IMR-90 (cell line): ENCODE measurements at regions of chr2 and their contacts with region 1.

Region 1: DNA sequence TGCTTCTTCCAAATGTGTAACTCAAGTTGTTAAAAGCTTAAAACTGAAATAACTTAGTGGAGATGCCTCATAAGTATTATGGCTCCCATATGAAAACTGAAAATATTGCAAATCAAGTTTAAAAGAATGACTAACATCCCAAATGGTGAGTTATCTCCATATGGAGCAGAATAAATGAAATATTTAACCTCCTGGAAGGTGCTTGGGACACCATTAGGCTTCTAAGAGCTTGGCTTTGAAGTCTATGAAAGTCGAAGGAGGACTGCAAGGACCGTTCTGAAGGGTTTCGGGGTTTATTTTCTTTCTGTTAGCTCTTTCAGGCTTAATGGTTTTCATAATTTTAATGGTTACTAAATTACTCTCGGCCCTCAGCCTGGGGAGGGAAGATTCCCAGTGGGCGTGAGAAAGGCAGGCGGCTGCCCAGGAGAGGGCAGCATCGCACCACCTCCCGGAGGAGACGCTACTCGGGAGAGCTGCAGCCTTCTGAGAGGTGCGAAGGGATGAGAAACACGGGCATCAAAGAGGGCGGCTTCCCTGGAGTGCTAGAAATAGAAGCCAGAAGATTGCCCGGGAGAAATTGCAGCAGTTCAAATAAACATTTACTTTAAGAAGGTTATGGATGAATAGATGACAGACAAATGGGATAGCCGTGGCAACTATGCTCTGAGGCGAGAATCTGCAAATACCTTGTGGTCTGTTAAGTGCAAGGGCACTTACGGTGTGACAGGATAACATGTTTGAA is 43.1 kb downstream of the MAP3K19 start:
- DNase-seq: peak; percentile 62
- ATAC-seq: peak; percentile 100
- H3K4me3 ChIP-seq: no peak overlapping the region
- H3K27ac ChIP-seq: no peak overlapping the region
- H3K4me1 ChIP-seq: no peaks in the 10 kb centered on the region
- H3K27me3 ChIP-seq: peaks cover 17% of the 10 kb centered on the region
- CTCF ChIP-seq: peak; percentile 96
- POLR2A ChIP-seq: no peak
- RAD21 ChIP-seq: peak; percentile 99

Region 2: GRCh38 chr2:135226961-135227360 is 222.8 kb after region 1 on chr2:
- CTCF ChIA-PET with region 1: no interaction called
- POLR2A ChIA-PET with region 1: no interaction called
- dilution Hi-C with region 1: no loop called
- in situ Hi-C with region 1: no loop called
- intact Hi-C with region 1: no loop called
- DNase-seq: peak; percentile 60
- ATAC-seq: peak; percentile 82
- H3K4me3 ChIP-seq: no peak overlapping the region
- H3K27ac ChIP-seq: no peak overlapping the region
- H3K4me1 ChIP-seq: no peaks in the 10 kb centered on the region; the same call in 1 of the 2 replicates
- H3K27me3 ChIP-seq: no peaks in the 10 kb centered on the region
- CTCF ChIP-seq: no peak
- POLR2A ChIP-seq: no peak
- RAD21 ChIP-seq: no peak

Region 3: DNA sequence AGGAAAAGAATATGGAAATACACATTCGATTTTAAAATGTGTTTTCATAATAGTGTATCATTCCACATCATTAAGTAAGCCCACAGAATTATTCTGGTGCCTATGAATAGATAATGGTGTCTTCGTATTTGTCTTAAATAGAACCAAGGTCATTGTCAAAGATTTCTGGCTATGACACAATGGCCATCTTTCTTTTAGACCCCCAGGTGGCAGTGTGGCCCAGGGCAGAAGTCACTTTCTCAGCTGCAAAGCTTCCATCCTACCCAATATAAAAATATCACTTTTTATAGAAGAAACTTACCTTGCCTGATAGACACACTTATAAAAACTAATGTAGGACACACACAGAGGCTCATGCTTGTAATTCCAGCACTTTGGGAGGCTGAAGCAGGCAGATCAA is 469.4 kb after region 1 on chr2:
- CTCF ChIA-PET with region 1: interaction called, 3 read pairs
- POLR2A ChIA-PET with region 1: no interaction called
- dilution Hi-C with region 1: no loop called
- in situ Hi-C with region 1: no loop called
- intact Hi-C with region 1: loop called (anchors 5 kb)
- DNase-seq: peak; percentile 8
- ATAC-seq: no peak
- H3K4me3 ChIP-seq: no peak overlapping the region
- H3K27ac ChIP-seq: no peak overlapping the region
- H3K4me1 ChIP-seq: no peaks in the 10 kb centered on the region
- H3K27me3 ChIP-seq: no peaks in the 10 kb centered on the region
- CTCF ChIP-seq: peak; percentile 49
- POLR2A ChIP-seq: no peak
- RAD21 ChIP-seq: peak; percentile 66

Region 4: DNA sequence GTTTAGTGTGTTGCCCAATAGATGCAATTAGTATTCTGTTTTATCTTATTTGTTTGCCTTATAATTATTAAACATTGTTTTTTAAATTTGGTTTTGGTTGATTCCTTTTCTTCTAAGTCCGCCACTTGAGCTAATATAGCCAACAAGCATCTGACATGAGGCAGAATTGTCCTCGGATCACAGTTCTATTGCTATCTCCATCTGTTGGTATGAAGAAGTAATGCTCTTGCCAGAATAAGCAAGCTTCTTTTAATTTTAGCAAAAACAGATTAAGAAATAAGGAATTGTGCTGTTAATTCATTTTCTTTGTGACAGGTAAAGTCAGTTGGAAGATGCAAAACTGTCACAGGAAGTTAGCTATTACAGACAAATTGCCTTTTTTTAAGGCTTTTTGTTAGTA is 581.4 kb after region 1 on chr2:
- CTCF ChIA-PET with region 1: interaction called, 4 read pairs
- POLR2A ChIA-PET with region 1: no interaction called
- dilution Hi-C with region 1: no loop called
- in situ Hi-C with region 1: no loop called
- intact Hi-C with region 1: loop called (anchors 5 kb)
- DNase-seq: peak; percentile 26
- ATAC-seq: no peak
- H3K4me3 ChIP-seq: no peak overlapping the region
- H3K27ac ChIP-seq: no peak overlapping the region
- H3K4me1 ChIP-seq: peaks cover 3% of the 10 kb centered on the region
- H3K27me3 ChIP-seq: no peaks in the 10 kb centered on the region
- CTCF ChIP-seq: 0 out of 2 replicates have a peak, but pooled peaks have one; percentile 23
- POLR2A ChIP-seq: no peak
- RAD21 ChIP-seq: no peak

Region 5: GRCh38 chr2:135600915-135601314 is 596.7 kb after region 1 on chr2:
- CTCF ChIA-PET with region 1: no interaction called
- POLR2A ChIA-PET with region 1: no interaction called
- dilution Hi-C with region 1: no loop called
- in situ Hi-C with region 1: loop called (anchors 10 kb)
- intact Hi-C with region 1: loop called (anchors 1 kb)
- DNase-seq: peak; percentile 28
- ATAC-seq: no peak
- H3K4me3 ChIP-seq: no peak overlapping the region
- H3K27ac ChIP-seq: no peak overlapping the region
- H3K4me1 ChIP-seq: no peaks in the 10 kb centered on the region
- H3K27me3 ChIP-seq: no peaks in the 10 kb centered on the region
- CTCF ChIP-seq: peak; percentile 41
- POLR2A ChIP-seq: no peak
- RAD21 ChIP-seq: peak; percentile 57

Region 6: DNA sequence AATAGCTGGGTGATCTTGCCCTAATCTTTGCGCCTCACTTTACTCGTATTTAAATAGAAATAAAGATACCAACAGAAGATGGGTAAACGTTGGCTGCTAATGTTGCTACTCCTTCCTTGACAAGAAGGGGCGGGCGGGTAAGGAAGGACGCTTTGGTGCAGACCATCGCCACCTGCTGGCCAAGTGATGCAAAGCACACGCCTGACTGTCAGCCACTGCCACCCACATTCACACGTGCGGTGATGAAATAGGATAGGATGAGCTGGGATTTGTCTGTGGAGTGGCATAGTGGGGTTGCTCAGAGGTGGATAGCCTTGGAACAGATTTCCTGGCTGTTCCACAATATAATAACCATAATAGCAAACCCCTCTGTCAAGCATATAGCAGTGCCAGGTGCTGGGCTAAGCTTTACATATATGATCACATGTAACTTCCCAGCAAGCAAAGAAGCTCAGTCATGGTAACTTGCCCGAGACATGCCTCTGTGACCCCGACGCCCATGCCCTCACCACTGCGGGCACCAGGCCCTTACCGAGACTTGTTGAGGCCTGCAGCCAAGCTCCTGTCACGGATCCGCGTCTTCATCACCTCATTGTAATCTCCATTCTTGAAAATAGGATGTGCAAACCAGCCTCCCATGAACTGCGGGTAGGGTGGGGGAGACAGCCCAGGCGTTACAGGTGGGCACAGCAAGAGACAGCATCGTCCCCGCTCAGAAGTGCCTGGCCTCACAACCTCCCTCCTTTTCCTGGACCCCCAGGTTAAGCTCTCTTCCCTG is 793.5 kb after region 1 on chr2:
- CTCF ChIA-PET with region 1: no interaction called
- POLR2A ChIA-PET with region 1: no interaction called
- dilution Hi-C with region 1: no loop called
- in situ Hi-C with region 1: no loop called
- intact Hi-C with region 1: loop called (anchors 1 kb)
- DNase-seq: peak; percentile 79
- ATAC-seq: peak; percentile 98
- H3K4me3 ChIP-seq: no peak overlapping the region
- H3K27ac ChIP-seq: no peak overlapping the region
- H3K4me1 ChIP-seq: no peaks in the 10 kb centered on the region
- H3K27me3 ChIP-seq: no peaks in the 10 kb centered on the region
- CTCF ChIP-seq: peak; percentile 93
- POLR2A ChIP-seq: no peak
- RAD21 ChIP-seq: peak; percentile 62